ENCODE measurements at regions of chr20 and their contacts with region 1.

Region 1: GRCh38 chr20:10219452-10219791 is 792 bp downstream of the SNAP25 start:
- DNase-seq: peak; percentile 59
- H3K4me3 Mint-ChIP-seq: peak overlapping the region; percentile 72
- H3K27ac Mint-ChIP-seq: no peak overlapping the region
- H3K4me1 Mint-ChIP-seq: peaks cover 12% of the 10 kb centered on the region
- H3K27me3 Mint-ChIP-seq: peaks cover 19% of the 10 kb centered on the region

Region 2: DNA sequence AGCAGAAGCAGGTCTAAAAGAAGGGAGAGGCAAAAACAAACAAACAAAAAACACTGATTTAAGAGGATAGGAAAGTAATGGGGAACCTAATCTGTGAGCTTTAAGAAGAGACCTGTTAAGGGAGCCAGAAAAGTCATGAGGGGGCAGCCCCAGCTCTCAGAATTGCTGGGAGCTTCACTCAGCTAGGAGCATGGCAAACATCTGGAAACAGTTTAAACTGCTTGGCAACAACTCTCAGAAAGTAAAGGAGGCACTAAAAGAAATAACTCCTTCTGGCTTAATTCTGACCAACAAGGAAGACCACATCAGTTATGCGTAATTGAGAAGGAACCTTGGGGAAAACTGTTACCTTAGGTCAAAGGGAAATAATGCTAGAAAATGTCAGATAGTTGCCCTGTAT is 583.7 kb before region 1 on chr20:
- intact Hi-C with region 1: no loop called
- DNase-seq: no peak
- H3K4me3 Mint-ChIP-seq: no peak overlapping the region
- H3K27ac Mint-ChIP-seq: no peak overlapping the region
- H3K4me1 Mint-ChIP-seq: no peaks in the 10 kb centered on the region
- H3K27me3 Mint-ChIP-seq: no peaks in the 10 kb centered on the region

Region 3: DNA sequence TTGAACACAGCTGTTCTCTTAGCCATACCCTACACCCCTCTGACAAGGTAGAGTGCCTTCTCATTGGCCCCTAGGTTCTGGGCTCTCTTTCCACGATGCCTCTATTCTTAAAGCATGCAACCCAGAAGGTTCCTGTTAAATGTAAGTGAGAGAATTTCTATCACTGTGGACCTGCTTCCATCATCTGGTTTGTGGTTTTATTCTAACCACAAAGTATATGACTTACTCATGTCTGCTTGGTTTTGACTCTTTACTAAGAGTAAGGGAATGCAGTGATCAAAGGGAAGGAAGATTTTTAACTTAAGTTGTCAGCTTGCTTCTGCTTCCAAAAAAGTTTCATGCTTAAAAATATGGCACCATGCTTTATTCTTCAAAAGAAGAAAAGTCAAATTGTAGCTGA is 104.4 kb before region 1 on chr20:
- intact Hi-C with region 1: loop called (anchors 5 kb)
- DNase-seq: no peak
- H3K4me3 Mint-ChIP-seq: no peak overlapping the region
- H3K27ac Mint-ChIP-seq: no peak overlapping the region
- H3K4me1 Mint-ChIP-seq: no peaks in the 10 kb centered on the region
- H3K27me3 Mint-ChIP-seq: no peaks in the 10 kb centered on the region

Region 4: GRCh38 chr20:10171864-10172751 is 47.3 kb before region 1 on chr20:
- intact Hi-C with region 1: loop called (anchors 2 kb)
- DNase-seq: no peak
- H3K4me3 Mint-ChIP-seq: peak overlapping the region; percentile 76
- H3K27ac Mint-ChIP-seq: peak overlapping the region; percentile 33
- H3K4me1 Mint-ChIP-seq: peaks cover 7% of the 10 kb centered on the region
- H3K27me3 Mint-ChIP-seq: peaks cover 15% of the 10 kb centered on the region

Region 5: DNA sequence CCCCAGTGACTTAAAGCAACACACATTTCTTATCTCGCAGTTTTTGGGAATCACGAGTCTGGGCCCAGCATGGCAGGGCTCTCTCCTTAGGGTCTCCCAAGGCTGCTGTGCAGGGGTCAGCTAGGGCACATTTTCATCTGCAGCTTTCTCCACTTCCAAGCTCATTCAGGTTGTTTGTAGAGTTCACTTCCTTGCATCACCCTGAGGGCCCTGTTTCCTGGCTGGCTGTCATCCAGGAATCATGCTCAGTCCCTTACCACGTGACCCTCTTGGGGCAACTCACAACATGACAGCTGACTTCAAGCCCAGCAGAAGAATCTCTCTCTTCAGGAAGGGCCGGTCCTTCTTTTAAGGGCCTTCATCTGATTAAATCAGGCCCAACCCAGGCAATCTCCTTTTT is 20.5 kb after region 1 on chr20:
- intact Hi-C with region 1: no loop called
- DNase-seq: no peak
- H3K4me3 Mint-ChIP-seq: no peak overlapping the region
- H3K27ac Mint-ChIP-seq: no peak overlapping the region
- H3K4me1 Mint-ChIP-seq: no peaks in the 10 kb centered on the region
- H3K27me3 Mint-ChIP-seq: no peaks in the 10 kb centered on the region

Region 6: GRCh38 chr20:10350188-10350842 is 130.9 kb after region 1 on chr20:
- intact Hi-C with region 1: loop called (anchors 2 kb)
- DNase-seq: no peak
- H3K4me3 Mint-ChIP-seq: peak overlapping the region; percentile 9
- H3K27ac Mint-ChIP-seq: peak overlapping the region; percentile 75
- H3K4me1 Mint-ChIP-seq: peaks cover 24% of the 10 kb centered on the region
- H3K27me3 Mint-ChIP-seq: no peaks in the 10 kb centered on the region

Region 7: DNA sequence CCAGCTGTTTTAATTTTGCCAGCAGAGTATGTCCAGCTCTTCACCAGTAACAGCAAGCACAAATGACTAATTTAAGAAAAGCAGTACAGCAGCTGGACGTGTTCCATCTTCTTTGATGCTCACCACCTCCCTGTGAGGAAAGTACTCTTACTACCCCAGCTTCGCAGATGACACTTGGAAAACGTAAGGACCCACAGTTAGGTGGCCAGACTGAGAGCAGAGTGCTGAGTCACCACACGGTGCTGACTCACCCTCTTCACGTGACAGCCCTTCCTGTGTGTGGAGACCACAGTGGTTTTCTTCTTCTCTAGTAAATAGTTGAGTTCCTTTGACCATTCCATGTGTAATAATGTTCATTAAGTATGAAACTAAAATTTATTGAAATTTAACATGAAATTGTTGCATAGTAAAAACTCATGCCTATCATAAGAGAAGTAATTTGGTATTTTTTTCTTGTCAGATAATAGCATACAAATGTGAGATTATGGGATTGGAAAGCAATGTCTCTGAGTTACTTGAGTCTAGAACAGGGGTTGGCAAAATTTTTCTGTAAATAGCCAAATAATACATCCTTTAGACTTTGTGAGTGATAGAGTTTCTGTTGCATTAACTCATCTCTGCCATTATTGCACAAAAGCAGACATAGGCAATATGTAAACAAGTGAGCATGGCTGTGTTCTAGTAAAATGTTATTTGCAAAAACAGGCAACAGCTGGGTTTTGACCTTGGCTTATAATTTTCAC is 292.3 kb after region 1 on chr20:
- intact Hi-C with region 1: loop called (anchors 5 kb)
- DNase-seq: peak; percentile 70
- H3K4me3 Mint-ChIP-seq: peak overlapping the region; percentile 36
- H3K27ac Mint-ChIP-seq: peak overlapping the region; percentile 64
- H3K4me1 Mint-ChIP-seq: peaks cover 44% of the 10 kb centered on the region
- H3K27me3 Mint-ChIP-seq: no peaks in the 10 kb centered on the region